ENCODE measurements at regions of chr18 and their contacts with region 1.

Region 1: GRCh38 chr18:48475635-48476549 is 62.9 kb upstream of the CTIF start:
- DNase-seq: peak in 7 of 10 donors; percentile 18 to 66 (median 55)
- H3K4me3 ChIP-seq: no peak overlapping the region
- H3K27ac ChIP-seq: no peak overlapping the region
- H3K27me3 ChIP-seq: peaks cover 0 to 3% (median 0%) of the 10 kb centered on the region in 45 donors
- CTCF ChIP-seq: peak; percentile 44 to 99 (median 90)

Region 2: GRCh38 chr18:48538531-48539405 is 62.9 kb after region 1 on chr18 and contains the start of gene CTIF:
- intact Hi-C with region 1: loop called (anchors 2 kb)
- DNase-seq: peak; percentile 94 to 100 (median 98)
- H3K4me3 ChIP-seq: peak within 1 kb of the TSS; percentile 61 to 97 (median 86)
- H3K27ac ChIP-seq: peak within 1 kb of the TSS; percentile 73 to 97 (median 92)
- H3K27me3 ChIP-seq: no peaks in the 10 kb centered on the region
- CTCF ChIP-seq: peak in 26 of 56 donors; percentile 7 to 47 (median 32)
- total RNA-seq, gene CTIF: 148 to 308 (median 218) TPM

Region 3: DNA sequence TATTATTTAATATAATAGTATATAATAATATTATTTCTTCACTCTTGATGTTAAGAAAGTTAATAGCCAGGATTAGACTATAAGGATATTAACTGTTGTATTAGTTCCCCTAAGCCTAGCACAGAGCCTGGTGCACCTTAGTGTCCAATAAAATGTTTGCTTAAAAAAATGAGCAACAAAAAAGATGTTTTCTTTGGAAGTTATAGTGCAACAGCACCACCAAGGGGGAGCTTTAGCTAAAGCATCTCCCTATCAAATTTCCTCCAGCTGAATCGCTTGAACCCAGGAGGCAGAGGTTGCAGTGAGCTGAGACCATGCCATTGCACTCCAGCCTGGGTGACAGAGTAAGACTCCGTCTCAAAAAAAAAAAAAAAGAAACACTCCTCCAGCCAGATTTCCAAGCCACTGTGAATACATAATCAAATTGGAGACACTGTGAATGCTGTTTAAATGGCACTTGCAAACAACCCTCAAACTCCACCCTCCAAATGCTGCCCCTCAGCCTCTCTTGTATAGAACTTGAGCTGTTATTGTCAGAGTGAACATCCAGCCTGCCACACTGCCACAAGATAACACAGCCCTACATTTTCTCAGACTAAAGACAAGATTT is 762.6 kb after region 1 on chr18:
- intact Hi-C with region 1: loop called in 1 of 2 experiments (anchors 10 kb)
- DNase-seq: no peak
- H3K4me3 ChIP-seq: no peak overlapping the region
- H3K27ac ChIP-seq: peak overlapping the region in 7 of 59 donors; percentile 8 to 46 (median 18)
- H3K27me3 ChIP-seq: no peaks in the 10 kb centered on the region
- CTCF ChIP-seq: peak in 55 of 56 donors; percentile 32 to 79 (median 62)

Measured in dorsolateral prefrontal cortex (tissue), 120 donors.